Activated T-helper 1 cell treated with anti-CD3 and anti-CD28 coated beads, Interleukin-12 subunit alpha, Interleukin-12 subunit beta, Interleukin-2, Interleukin-4 antibody, amounts not matched to agents 30 ng/mL and 10 ng/mL and 1 ng/mL, durations not matched to agents 14 hours and 24 hours and 36 hours (primary cell): ENCODE measurements at regions of chr2 and their contacts with region 1.

Region 1: GRCh38 chr2:9594366-9595054 is 36.3 kb downstream of the YWHAQ start:
- DNase-seq: no peak
- H3K4me3 Mint-ChIP-seq: peak overlapping the region; percentile 28
- H3K27ac Mint-ChIP-seq: peak overlapping the region; percentile 85
- H3K4me1 Mint-ChIP-seq: peaks cover 71% of the 10 kb centered on the region
- H3K27me3 Mint-ChIP-seq: no peaks in the 10 kb centered on the region

Region 2: DNA sequence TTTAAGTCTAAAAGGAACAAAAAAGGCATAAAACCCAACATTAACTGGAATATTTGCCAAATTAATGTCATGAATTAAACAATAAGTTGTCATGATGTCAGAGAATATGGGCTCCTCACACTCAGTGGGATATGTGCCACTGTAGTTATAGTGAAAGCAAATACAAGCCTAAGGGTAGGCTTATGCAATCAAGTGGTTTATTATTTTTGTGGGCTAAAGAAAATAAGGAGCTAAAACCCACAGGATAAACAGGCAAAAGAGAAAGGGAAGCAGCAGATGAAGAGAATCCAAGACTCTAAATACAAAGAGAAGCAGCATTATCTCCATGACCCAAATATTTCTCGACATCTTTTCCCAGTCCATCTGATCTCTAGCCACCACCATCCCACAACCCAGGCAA is 18.8 kb after region 1 on chr2:
- intact Hi-C with region 1: loop called (anchors 1 kb)
- DNase-seq: no peak
- H3K4me3 Mint-ChIP-seq: no peak overlapping the region
- H3K27ac Mint-ChIP-seq: no peak overlapping the region
- H3K4me1 Mint-ChIP-seq: peaks cover 92% of the 10 kb centered on the region
- H3K27me3 Mint-ChIP-seq: no peaks in the 10 kb centered on the region

Region 3: GRCh38 chr2:9641641-9642040 is 47.1 kb after region 1 on chr2:
- intact Hi-C with region 1: loop called (anchors 1 kb)
- DNase-seq: peak; percentile 34
- H3K4me3 Mint-ChIP-seq: peak overlapping the region; percentile 48
- H3K27ac Mint-ChIP-seq: peak overlapping the region; percentile 59
- H3K4me1 Mint-ChIP-seq: peaks cover 29% of the 10 kb centered on the region
- H3K27me3 Mint-ChIP-seq: peaks cover 10% of the 10 kb centered on the region

Region 4: GRCh38 chr2:9708683-9709538 is 114.4 kb after region 1 on chr2:
- intact Hi-C with region 1: loop called (anchors 1 kb)
- DNase-seq: no peak
- H3K4me3 Mint-ChIP-seq: no peak overlapping the region
- H3K27ac Mint-ChIP-seq: peak overlapping the region; percentile 86
- H3K4me1 Mint-ChIP-seq: peaks cover 58% of the 10 kb centered on the region
- H3K27me3 Mint-ChIP-seq: no peaks in the 10 kb centered on the region